Heart right ventricle (tissue), 16 donors: ENCODE measurements at regions of chr10 and their contacts with region 1.

Region 1: DNA sequence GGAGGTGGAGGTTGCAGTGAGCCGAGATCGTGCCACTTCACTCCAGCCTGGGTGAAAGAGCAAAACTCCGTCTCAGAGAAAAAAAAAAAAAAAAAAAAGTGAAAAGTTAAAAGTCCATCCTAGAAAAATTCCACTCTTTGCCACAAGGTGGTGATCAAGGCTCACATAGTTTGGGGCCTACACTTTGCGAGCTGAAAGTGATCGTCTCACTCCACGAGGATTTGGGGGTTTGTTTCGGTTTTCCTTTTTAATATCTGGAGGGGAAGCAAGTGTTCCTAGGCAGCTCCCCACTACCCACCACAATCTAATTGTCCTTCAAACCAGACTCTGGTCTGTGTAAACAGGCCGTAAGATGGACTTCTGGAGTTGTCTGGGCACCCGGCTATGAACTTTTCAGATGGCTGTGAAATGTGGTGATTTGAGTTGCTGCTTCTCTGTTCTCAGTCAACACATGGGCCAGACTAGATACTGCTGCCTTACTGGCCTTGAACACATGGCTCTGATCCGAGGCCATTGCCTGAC is 27.1 kb downstream of the PRLHR start:
- DNase-seq: peak in 1 of 2 donors; percentile 65
- ATAC-seq: peak; percentile 31 to 80 (median 59)
- H3K4me3 ChIP-seq: peak overlapping the region in 1 of 10 donors; percentile 24
- H3K27ac ChIP-seq: no peak overlapping the region
- H3K4me1 ChIP-seq: peaks cover 2 to 30% (median 8%) of the 10 kb centered on the region in 9 donors
- H3K27me3 ChIP-seq: peaks cover 0 to 14% (median 7%) of the 10 kb centered on the region in 7 donors
- CTCF ChIP-seq: peak; percentile 44 to 85 (median 76)

Region 2: GRCh38 chr10:118720685-118721538 is 152.5 kb after region 1 on chr10:
- intact Hi-C with region 1: loop called (anchors 1 to 5 kb)
- DNase-seq: peak in 1 of 2 donors; percentile 57
- ATAC-seq: peak in 2 of 8 donors; percentile 52 to 71
- H3K4me3 ChIP-seq: no peak overlapping the region
- H3K27ac ChIP-seq: no peak overlapping the region
- H3K4me1 ChIP-seq: peaks cover 0 to 28% (median 6%) of the 10 kb centered on the region in 9 donors
- H3K27me3 ChIP-seq: no peaks in the 10 kb centered on the region
- CTCF ChIP-seq: peak; percentile 71 to 94 (median 89)

Region 3: DNA sequence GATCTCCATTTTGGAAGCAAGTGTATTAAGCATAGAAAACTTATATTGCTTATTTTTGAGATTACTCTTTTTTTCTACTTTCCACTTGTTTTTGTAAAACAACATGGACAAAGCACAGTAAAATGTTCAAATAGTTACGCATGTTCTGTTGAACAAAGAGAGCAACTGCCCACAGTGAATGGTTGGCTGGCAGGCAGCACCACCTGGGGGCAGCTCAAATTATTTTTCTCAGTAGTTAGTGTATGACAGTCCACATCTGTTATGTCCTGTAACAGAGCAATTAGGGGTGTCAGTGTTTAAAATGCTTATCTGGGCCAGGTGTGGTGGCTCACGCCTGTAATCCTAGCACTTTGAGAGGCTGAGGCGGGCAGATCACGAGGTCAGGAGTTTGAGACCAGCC is 232.5 kb after region 1 on chr10:
- intact Hi-C with region 1: loop called (anchors 2 to 10 kb)
- DNase-seq: peak in 1 of 2 donors; percentile 41
- ATAC-seq: peak in 7 of 8 donors; percentile 49 to 86 (median 73)
- H3K4me3 ChIP-seq: no peak overlapping the region
- H3K27ac ChIP-seq: no peak overlapping the region
- H3K4me1 ChIP-seq: no peaks in the 10 kb centered on the region
- H3K27me3 ChIP-seq: peaks cover 0 to 17% (median 0%) of the 10 kb centered on the region in 7 donors
- CTCF ChIP-seq: peak; percentile 7 to 64 (median 53)

Region 4: GRCh38 chr10:118850418-118851061 is 282.2 kb after region 1 on chr10:
- intact Hi-C with region 1: loop called in 1 of 10 experiments (anchors 2 kb)
- DNase-seq: peak; percentile 43 to 61
- ATAC-seq: peak in 1 of 8 donors; percentile 47
- H3K4me3 ChIP-seq: no peak overlapping the region
- H3K27ac ChIP-seq: no peak overlapping the region
- H3K4me1 ChIP-seq: peaks cover 0 to 12% (median 0%) of the 10 kb centered on the region in 9 donors
- H3K27me3 ChIP-seq: no peaks in the 10 kb centered on the region
- CTCF ChIP-seq: peak in 8 of 9 donors; percentile 16 to 71 (median 58)